ENCODE measurements at regions of chr17 and their contacts with region 1.

Region 1: GRCh38 chr17:80219013-80219762 is 945 bp downstream of the SGSH start:
- H3K4me3 Mint-ChIP-seq: peak overlapping the region; percentile 91
- H3K27ac Mint-ChIP-seq: peak overlapping the region; percentile 99
- H3K4me1 Mint-ChIP-seq: peaks cover 78% of the 10 kb centered on the region
- H3K27me3 Mint-ChIP-seq: peaks cover 27% of the 10 kb centered on the region

Region 2: DNA sequence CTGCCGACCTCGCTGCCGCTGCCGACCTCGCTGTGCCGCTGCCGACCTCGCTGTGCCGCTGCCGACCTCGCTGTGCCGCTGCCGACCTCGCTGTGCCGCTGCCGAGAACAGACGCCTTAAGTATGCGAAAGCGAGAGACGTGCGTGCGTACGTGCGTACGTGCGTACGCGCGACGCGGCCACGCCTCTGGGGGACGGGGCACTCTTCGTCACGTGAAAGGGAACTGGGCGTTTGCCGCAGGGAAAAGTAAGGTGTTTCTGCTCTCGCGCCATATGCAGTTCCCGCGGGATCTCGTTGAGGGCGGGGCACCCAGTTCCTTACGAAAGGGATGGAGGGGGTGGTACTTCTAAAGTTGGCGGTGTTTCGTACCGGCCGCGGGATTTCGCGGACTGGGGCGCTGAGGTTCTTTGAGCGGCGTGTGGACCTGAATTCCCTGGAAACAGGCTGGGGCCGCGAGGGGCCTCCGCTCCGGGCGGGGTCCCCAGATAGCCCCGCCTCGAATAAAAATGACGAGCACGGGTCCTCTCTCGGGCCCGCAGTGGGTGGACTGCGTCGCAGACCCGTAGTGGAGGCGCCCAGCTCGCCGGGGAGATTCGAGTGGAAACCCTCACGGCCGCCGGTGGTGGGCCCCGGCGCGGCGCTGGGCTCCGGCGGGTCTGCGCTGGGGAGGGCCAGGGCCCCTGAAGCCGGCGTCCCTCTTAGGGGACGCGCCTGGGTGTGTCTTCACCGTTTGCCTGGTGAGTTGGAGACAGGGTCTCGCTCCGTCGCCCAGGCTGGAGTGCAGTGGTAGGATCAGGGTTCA is 72.0 kb before region 1 on chr17 and contains the start of gene EIF4A3:
- intact Hi-C with region 1: loop called (anchors 5 kb)
- H3K4me3 Mint-ChIP-seq: peak within 1 kb of the TSS; percentile 89
- H3K27ac Mint-ChIP-seq: peak within 1 kb of the TSS; percentile 62
- H3K4me1 Mint-ChIP-seq: peaks cover 32% of the 10 kb centered on the region
- H3K27me3 Mint-ChIP-seq: no peaks in the 10 kb centered on the region

Region 3: GRCh38 chr17:80254396-80255251 is 35.4 kb after region 1 on chr17:
- intact Hi-C with region 1: loop called (anchors 5 kb)
- H3K4me3 Mint-ChIP-seq: peak overlapping the region; percentile 51
- H3K27ac Mint-ChIP-seq: peak overlapping the region; percentile 99
- H3K4me1 Mint-ChIP-seq: peaks cover 72% of the 10 kb centered on the region
- H3K27me3 Mint-ChIP-seq: no peaks in the 10 kb centered on the region

Region 4: GRCh38 chr17:80263253-80264204 is 44.3 kb after region 1 on chr17:
- intact Hi-C with region 1: loop called (anchors 1 kb)
- H3K4me3 Mint-ChIP-seq: peak overlapping the region; percentile 98
- H3K27ac Mint-ChIP-seq: peak overlapping the region; percentile 90
- H3K4me1 Mint-ChIP-seq: peaks cover 66% of the 10 kb centered on the region
- H3K27me3 Mint-ChIP-seq: no peaks in the 10 kb centered on the region

Measured in dendritic cell treated with granulocyte-macrophage colony-stimulating factor and Interleukin-4, amounts not matched to agents 40 ng/mL and 50 ng/mL, for 4 days (primary cell).